ENCODE measurements at regions of chr4 and their contacts with region 1.

Region 1: GRCh38 chr4:183074296-183074990 is 24.6 kb upstream of the WWC2 start:
- DNase-seq: no peak
- H3K4me3 Mint-ChIP-seq: no peak overlapping the region
- H3K27ac Mint-ChIP-seq: no peak overlapping the region
- H3K4me1 Mint-ChIP-seq: peaks cover 19% of the 10 kb centered on the region
- H3K27me3 Mint-ChIP-seq: no peaks in the 10 kb centered on the region
- CTCF ChIP-seq: no peak

Region 2: GRCh38 chr4:183249857-183250256 is 175.4 kb after region 1 on chr4:
- CTCF ChIA-PET with region 1: interaction called, 37 read pairs
- intact Hi-C with region 1: loop called (anchors 1 kb)
- DNase-seq: peak; percentile 43
- H3K4me3 Mint-ChIP-seq: no peak overlapping the region
- H3K27ac Mint-ChIP-seq: no peak overlapping the region
- H3K4me1 Mint-ChIP-seq: peaks cover 28% of the 10 kb centered on the region
- H3K27me3 Mint-ChIP-seq: no peaks in the 10 kb centered on the region
- CTCF ChIP-seq: no peak

Region 3: DNA sequence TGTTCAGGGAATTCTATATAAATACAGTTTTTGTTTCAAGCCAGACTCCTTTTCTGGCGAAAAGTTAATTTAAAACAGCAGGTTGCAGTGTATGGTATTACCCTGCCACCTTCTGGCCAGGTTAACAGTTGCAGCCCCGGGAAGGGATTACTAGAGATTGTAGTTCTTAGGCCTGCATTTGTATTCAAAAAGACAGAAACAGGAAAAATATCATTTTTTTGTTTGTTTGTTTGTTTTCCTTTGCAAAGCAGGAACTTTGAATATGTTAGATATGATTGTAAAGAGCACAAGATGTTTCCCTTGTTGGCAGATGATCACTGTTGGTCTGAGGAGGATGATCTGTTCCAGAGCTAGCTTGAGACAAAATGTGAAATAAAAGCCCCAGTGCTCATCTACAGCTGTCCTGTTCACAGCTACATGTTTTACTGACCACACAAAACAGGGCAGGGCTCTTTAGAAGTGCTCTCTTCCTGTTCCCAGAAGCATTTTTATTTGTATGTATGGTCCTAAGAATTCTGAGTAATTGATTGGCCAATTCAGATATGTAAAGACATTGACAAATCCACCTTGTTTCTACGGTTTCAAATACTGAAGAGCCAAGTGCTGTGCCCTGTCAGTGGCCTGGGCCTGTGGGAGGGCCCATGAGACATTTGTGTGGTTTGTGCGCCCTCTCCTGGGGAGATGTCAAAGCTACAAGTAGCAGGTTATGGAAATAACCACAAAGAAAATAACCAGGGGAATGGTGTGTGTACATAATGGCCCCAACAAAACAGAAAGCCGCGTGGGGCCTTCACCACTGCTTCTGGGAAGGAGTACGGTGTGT is 187.7 kb after region 1 on chr4:
- CTCF ChIA-PET with region 1: interaction called, 15 read pairs
- intact Hi-C with region 1: no loop called
- DNase-seq: peak; percentile 79
- H3K4me3 Mint-ChIP-seq: no peak overlapping the region
- H3K27ac Mint-ChIP-seq: peak overlapping the region; percentile 23
- H3K4me1 Mint-ChIP-seq: peaks cover 23% of the 10 kb centered on the region
- H3K27me3 Mint-ChIP-seq: no peaks in the 10 kb centered on the region
- CTCF ChIP-seq: peak; percentile 60

Measured in Calu3 (cell line).